H1 (cell line): ENCODE measurements at regions of chr10 and their contacts with region 1.

Region 1: DNA sequence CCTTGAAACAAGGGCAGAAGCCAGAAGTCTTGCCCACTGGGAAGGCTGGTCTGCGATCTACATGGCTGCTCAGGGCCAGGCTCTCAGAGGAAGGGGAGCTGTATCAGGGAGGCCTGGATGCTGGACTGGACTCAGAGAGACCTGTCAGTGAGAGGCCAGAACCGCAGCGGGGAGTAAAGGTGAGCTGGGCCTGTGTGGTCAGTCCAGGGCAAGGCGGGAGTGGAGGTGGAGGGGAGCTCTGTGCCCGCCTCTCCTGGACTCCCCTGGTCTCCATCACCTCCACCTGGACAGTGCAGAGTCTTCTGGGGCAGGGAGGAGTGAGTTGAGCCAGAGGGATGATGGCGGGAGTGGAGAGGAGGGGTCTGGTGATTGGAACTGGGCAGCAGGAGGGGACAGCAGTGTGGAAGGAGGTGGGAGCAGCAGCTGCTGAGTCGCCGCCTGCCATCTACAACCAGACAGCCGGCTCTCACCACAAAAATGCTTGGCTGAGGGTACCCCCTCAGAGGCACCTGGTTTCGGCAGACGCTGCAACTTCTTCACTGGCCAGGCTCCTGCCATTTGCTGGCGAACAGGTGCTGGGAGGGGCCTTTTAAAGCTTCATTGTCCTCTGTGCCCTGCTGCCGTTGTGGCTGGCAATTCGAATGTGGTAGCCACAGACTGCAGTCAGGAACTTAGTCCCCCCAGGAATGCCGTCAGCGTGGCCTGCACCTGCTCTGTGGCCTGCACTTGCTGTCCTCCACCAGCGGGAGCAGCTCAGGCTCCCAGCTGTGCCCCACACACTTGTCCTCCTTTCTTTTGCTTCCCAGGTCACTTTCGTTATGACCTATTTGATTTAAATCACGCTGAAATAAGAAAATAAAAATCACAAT is 3.5 kb downstream of the RASSF4 start:
- DNase-seq: peak in 1 of 2 experiments; percentile 60
- H3K4me3 ChIP-seq: no peak overlapping the region
- H3K27ac ChIP-seq: no peak overlapping the region
- H3K4me1 ChIP-seq: peaks cover 25 to 47% (median 34%) of the 10 kb centered on the region in 4 experiments
- H3K27me3 ChIP-seq: peaks cover 0 to 7% (median 3%) of the 10 kb centered on the region in 4 experiments; a peak in 4 of 7 replicates
- CTCF ChIP-seq: peak; percentile 28 to 58 (median 54); a peak in 3 of 4 replicates
- EP300 ChIP-seq: no peak
- POLR2A ChIP-seq: no peak
- RAD21 ChIP-seq: peak in 1 of 2 experiments; percentile 25; a peak in 2 of 4 replicates

Region 2: GRCh38 chr10:44947371-44948152 is 15.5 kb before region 1 on chr10:
- CTCF ChIA-PET with region 1: interaction called, 143 read pairs
- POLR2A ChIA-PET with region 1: interaction called, 17 read pairs
- DNase-seq: peak in 1 of 2 experiments; percentile 28
- H3K4me3 ChIP-seq: no peak overlapping the region
- H3K27ac ChIP-seq: no peak overlapping the region
- H3K4me1 ChIP-seq: peaks cover 0 to 1% (median 0%) of the 10 kb centered on the region in 4 experiments; a peak in 1 of 7 replicates
- H3K27me3 ChIP-seq: no peaks in the 10 kb centered on the region; a peak in 1 of 7 replicates
- CTCF ChIP-seq: no peak
- EP300 ChIP-seq: no peak
- POLR2A ChIP-seq: no peak
- RAD21 ChIP-seq: no peak

Region 3: GRCh38 chr10:44952779-44953231 is 10.3 kb before region 1 on chr10:
- CTCF ChIA-PET with region 1: interaction called, 143 read pairs
- POLR2A ChIA-PET with region 1: interaction called, 17 read pairs
- DNase-seq: peak in 1 of 2 experiments; percentile 41
- H3K4me3 ChIP-seq: no peak overlapping the region
- H3K27ac ChIP-seq: no peak overlapping the region
- H3K4me1 ChIP-seq: peaks cover 0 to 7% (median 0%) of the 10 kb centered on the region in 4 experiments; a peak in 2 of 7 replicates
- H3K27me3 ChIP-seq: no peaks in the 10 kb centered on the region; a peak in 1 of 7 replicates
- CTCF ChIP-seq: no peak
- EP300 ChIP-seq: no peak
- POLR2A ChIP-seq: no peak
- RAD21 ChIP-seq: no peak

Region 4: DNA sequence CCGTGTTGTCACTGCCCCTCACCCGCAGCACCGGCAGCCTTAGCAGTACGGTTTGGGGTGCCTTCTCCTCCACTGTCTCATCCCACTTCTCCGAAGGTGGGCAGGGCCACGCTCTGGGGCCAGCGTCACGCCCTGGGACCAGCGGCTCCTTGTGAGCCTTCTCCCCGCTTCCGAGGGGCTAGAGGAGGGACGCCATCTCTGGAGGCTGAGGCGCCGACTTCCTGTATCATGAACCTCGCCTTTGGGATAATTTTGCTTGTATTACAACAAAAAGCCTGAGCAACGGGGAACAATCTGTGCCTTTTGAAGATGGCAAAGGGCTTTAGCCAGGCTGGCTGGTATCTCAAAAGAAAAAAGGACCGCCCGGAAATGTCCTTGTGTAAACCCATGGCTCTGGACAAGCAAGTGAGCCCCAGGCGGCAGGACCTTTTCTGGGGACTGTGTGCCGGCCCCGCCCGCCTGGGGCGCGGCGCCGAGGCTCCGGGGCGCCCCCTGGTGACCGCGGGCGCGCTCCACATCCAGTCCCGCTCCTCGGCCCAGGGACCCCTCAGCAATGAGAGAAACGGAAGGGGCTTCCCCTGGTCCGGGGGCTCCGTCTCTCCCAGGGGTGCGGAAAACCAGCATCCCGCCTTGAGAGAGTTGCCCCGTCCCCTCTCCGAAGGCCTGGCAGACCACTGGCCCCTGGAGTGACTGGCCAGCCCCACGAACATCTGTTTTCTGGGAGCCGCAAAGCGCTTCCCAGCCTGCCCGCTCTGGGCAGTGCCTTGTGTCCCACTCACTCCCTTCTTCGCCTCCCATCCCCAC is 11.7 kb after region 1 on chr10:
- CTCF ChIA-PET with region 1: interaction called, 32 read pairs
- POLR2A ChIA-PET with region 1: interaction called, 11 read pairs
- DNase-seq: peak in 1 of 2 experiments; percentile 88
- H3K4me3 ChIP-seq: peak overlapping the region; percentile 32 to 64 (median 46)
- H3K27ac ChIP-seq: no peak overlapping the region; the same call in 1 of the 2 replicates
- H3K4me1 ChIP-seq: peaks cover 25 to 51% (median 36%) of the 10 kb centered on the region in 4 experiments
- H3K27me3 ChIP-seq: no peaks in the 10 kb centered on the region; a peak in 1 of 7 replicates
- CTCF ChIP-seq: peak; percentile 70 to 87 (median 77)
- EP300 ChIP-seq: no peak
- POLR2A ChIP-seq: no peak
- RAD21 ChIP-seq: peak; percentile 53 to 77

Region 5: DNA sequence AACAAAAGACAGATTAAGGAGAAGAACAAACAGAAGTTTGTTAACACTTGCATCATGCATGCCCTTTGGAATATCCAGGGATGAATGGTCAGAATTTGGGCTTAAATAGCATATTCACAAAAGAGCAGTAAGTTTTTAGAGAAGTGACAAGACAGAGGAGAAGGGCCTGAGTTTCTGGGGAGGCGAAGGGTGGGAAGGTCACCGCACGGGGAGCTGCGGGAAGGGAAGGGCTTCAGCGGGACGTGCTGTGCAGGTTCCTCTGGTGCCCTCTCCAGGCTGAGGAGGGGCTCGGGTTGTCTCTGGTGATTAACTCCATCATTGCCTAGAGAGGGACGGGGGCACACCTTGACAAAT is 27.2 kb after region 1 on chr10:
- CTCF ChIA-PET with region 1: interaction called, 84 read pairs
- POLR2A ChIA-PET with region 1: interaction called, 7 read pairs
- DNase-seq: peak; percentile 64 to 69
- H3K4me3 ChIP-seq: peak overlapping the region in 2 of 4 experiments; percentile 14 to 16; a peak in 2 of 8 replicates
- H3K27ac ChIP-seq: no peak overlapping the region; the same call in 1 of the 2 replicates
- H3K4me1 ChIP-seq: peaks cover 9 to 43% (median 26%) of the 10 kb centered on the region in 4 experiments; a peak in 6 of 7 replicates
- H3K27me3 ChIP-seq: peaks cover 0 to 3% (median 1%) of the 10 kb centered on the region in 4 experiments; a peak in 4 of 7 replicates
- CTCF ChIP-seq: peak; percentile 78 to 87 (median 82)
- EP300 ChIP-seq: no peak
- POLR2A ChIP-seq: no peak
- RAD21 ChIP-seq: peak; percentile 60 to 73

Region 6: DNA sequence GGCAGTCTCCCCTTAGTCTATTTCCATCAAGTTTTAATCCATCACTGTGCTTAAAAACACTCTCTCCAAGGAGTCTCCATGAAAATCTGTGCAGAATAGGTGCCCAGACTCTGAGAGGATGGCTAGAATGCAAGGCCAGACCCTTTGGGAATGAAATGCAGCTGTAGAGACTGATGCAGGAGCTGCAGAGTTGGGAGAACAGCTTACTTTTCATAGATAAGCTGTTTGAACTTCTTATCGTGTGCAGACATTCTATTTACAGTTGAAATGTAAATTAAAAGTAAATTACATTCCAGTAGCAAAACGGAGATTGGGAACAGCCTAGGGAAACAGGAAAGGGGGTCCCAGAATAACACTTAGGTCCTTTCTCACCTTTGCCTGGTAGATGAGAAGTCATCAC is 52.5 kb after region 1 on chr10:
- CTCF ChIA-PET with region 1: no interaction called
- POLR2A ChIA-PET with region 1: no interaction called
- DNase-seq: no peak
- H3K4me3 ChIP-seq: no peak overlapping the region
- H3K27ac ChIP-seq: no peak overlapping the region
- H3K4me1 ChIP-seq: no peaks in the 10 kb centered on the region
- H3K27me3 ChIP-seq: no peaks in the 10 kb centered on the region
- CTCF ChIP-seq: no peak
- EP300 ChIP-seq: no peak
- POLR2A ChIP-seq: no peak
- RAD21 ChIP-seq: no peak

Region 7: DNA sequence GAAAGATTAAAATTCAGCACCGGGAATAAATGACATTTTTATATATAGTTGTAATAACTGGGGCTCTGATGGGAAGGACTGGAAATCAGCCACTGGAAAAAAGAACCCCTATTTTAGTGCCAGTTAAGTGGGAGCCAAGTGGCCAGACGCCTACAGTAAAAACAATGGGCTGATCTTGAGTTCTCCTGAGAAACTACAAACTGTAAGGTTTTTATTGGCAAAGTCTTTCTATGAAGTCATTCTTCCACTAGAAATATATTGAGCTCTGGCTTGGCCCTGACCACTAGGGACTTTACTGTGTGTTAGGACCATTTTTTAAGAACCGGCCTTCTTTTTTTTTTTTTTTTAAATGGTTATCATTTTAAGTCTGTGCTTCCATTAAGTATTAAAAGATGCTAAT is 117.2 kb after region 1 on chr10:
- CTCF ChIA-PET with region 1: no interaction called
- POLR2A ChIA-PET with region 1: no interaction called
- DNase-seq: no peak
- H3K4me3 ChIP-seq: no peak overlapping the region
- H3K27ac ChIP-seq: no peak overlapping the region
- H3K4me1 ChIP-seq: peaks cover 0 to 13% (median 2%) of the 10 kb centered on the region in 4 experiments; a peak in 3 of 7 replicates
- H3K27me3 ChIP-seq: no peaks in the 10 kb centered on the region
- CTCF ChIP-seq: no peak
- EP300 ChIP-seq: no peak
- POLR2A ChIP-seq: no peak
- RAD21 ChIP-seq: no peak